CD4-positive, alpha-beta T cell (primary cell): ENCODE measurements at regions of chr10 and their contacts with region 1.

Region 1: DNA sequence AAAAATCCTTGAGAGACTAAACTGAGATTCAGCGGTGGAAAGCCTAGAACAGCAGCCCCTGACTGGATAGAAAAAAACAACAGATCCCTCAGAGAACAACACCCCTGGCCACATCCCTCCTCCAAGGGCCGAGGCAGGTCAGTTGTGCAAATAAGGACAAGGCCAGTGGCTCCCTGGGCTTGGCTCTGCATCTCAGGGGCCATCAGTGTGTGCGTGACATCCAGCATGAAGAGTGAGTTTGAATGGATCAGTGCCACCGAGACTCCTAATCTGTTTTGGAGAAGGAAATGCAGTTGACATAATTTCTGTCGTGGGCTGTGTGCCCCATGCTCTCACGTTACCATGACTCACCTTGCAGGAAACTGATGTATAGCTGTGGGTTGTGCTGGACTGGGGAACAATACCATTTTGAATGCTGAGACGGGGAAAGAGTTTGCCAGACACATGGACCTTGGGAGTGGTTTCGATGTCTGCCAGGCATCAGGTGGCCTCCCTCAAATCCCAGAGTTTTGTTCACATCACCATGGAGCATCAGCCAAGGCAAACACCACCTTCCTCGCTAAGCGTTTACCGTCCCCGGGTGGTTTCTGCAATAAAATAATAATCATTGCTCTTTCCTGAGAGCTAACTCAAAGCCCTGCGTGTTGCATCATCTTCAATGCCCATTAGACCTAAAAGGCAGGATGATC is 153.2 kb upstream of the FZD8 start:
- DNase-seq: no peak
- ATAC-seq: no peak
- H3K4me3 ChIP-seq: no peak overlapping the region
- H3K4me3 Mint-ChIP-seq: no peak overlapping the region
- H3K27ac ChIP-seq: no peak overlapping the region
- H3K27ac Mint-ChIP-seq: no peak overlapping the region
- H3K4me1 ChIP-seq: no peaks in the 10 kb centered on the region
- H3K4me1 Mint-ChIP-seq: no peaks in the 10 kb centered on the region
- H3K27me3 ChIP-seq: no peaks in the 10 kb centered on the region
- H3K27me3 Mint-ChIP-seq: no peaks in the 10 kb centered on the region
- CTCF ChIP-seq: no peak

Region 2: GRCh38 chr10:34514290-34514689 is 1281.0 kb before region 1 on chr10:
- CTCF ChIA-PET with region 1: no interaction called
- POLR2A ChIA-PET with region 1: no interaction called
- intact Hi-C with region 1: loop called in 1 of 2 experiments (anchors 10 kb)
- DNase-seq: no peak
- ATAC-seq: no peak
- H3K4me3 ChIP-seq: no peak overlapping the region
- H3K4me3 Mint-ChIP-seq: no peak overlapping the region
- H3K27ac ChIP-seq: no peak overlapping the region
- H3K27ac Mint-ChIP-seq: no peak overlapping the region
- H3K4me1 ChIP-seq: no peaks in the 10 kb centered on the region
- H3K4me1 Mint-ChIP-seq: no peaks in the 10 kb centered on the region
- H3K27me3 ChIP-seq: no peaks in the 10 kb centered on the region
- H3K27me3 Mint-ChIP-seq: no peaks in the 10 kb centered on the region
- CTCF ChIP-seq: no peak